ENCODE measurements at regions of chr17 and their contacts with region 1.

Region 1: DNA sequence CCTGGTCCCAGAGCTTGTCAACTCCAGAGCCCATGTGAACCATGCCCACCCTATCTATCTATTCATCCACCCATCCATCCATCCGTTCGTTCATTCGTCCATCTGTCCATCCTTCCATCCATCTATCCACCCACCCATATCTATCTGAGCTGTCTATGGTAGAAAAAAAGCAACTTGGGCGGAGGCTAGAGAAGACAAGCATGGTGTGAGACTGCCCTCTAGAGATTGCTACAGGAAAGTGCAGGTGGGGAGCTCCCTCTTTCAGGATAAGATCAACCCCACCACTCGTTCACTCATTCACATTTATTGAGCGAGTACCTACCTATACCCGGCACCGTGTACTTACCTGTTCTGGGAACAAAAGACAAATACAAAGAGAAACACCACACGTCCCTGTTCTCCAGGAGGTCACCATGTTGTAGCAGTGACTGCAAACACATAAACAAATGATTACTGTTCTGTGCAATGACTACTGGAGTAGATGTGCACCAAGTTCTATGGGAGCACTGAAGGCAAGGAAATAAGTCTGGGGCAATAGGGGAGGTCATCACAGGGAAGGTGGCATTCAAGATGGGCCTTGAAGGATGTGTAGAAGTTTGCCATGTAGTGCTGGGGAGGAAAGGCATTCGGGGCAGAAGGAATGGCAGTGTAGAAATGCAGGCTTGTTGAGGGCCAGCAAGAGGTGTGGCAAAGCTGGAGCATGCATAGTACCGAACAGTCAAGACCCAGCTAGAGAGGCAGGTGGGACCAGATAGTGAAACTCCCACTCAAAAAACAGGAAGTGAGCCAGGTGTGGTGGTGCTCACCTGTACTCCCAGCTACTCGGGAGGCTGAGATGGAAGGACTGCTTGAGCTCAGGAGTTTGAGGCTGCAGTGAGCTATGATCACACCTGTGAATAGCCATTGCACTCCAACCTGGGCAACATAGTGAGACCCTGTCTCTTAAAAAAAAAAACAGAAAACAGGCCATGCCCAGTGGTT is 13.4 kb upstream of the ATP5MC1 start:
- DNase-seq: peak; percentile 68
- ATAC-seq: peak; percentile 83
- H3K4me3 Mint-ChIP-seq: no peak overlapping the region
- H3K27ac Mint-ChIP-seq: no peak overlapping the region
- H3K4me1 Mint-ChIP-seq: no peaks in the 10 kb centered on the region
- H3K27me3 Mint-ChIP-seq: no peaks in the 10 kb centered on the region
- CTCF ChIP-seq: peak; percentile 95

Region 2: DNA sequence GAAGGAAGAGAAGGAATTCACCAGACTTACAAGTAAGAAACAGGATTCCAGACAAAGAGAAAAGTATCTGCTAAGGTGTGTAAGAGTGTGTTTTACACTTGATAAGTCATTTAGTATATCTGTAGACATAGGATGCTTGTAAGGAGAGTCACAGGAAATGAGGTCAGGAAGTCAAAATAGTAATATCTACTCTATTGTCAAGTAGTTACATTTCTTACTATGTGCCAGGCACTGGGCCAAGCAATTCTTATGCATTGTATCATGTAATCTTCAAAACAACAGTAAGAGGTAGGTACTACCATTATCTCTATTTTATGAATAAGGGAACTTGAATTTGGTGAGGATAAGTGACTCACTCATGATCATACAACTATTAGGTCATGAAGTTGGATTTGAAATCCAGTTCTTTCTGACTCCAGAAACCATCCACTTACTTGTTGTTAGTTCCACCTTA is 642.5 kb before region 1 on chr17:
- CTCF ChIA-PET with region 1: no interaction called
- POLR2A ChIA-PET with region 1: no interaction called
- DNase-seq: no peak
- ATAC-seq: no peak
- H3K4me3 Mint-ChIP-seq: no peak overlapping the region
- H3K27ac Mint-ChIP-seq: no peak overlapping the region
- H3K4me1 Mint-ChIP-seq: peaks cover 5% of the 10 kb centered on the region
- H3K27me3 Mint-ChIP-seq: peaks cover 9% of the 10 kb centered on the region
- CTCF ChIP-seq: no peak

Region 3: GRCh38 chr17:48678141-48678971 is 200.9 kb before region 1 on chr17:
- CTCF ChIA-PET with region 1: interaction called, 119 read pairs
- POLR2A ChIA-PET with region 1: interaction called, 5 read pairs
- DNase-seq: peak; percentile 89
- ATAC-seq: peak; percentile 95
- H3K4me3 Mint-ChIP-seq: peak overlapping the region; percentile 64
- H3K27ac Mint-ChIP-seq: no peak overlapping the region
- H3K4me1 Mint-ChIP-seq: peaks cover 7% of the 10 kb centered on the region
- H3K27me3 Mint-ChIP-seq: peaks cover 37% of the 10 kb centered on the region
- CTCF ChIP-seq: peak; percentile 95

Region 4: DNA sequence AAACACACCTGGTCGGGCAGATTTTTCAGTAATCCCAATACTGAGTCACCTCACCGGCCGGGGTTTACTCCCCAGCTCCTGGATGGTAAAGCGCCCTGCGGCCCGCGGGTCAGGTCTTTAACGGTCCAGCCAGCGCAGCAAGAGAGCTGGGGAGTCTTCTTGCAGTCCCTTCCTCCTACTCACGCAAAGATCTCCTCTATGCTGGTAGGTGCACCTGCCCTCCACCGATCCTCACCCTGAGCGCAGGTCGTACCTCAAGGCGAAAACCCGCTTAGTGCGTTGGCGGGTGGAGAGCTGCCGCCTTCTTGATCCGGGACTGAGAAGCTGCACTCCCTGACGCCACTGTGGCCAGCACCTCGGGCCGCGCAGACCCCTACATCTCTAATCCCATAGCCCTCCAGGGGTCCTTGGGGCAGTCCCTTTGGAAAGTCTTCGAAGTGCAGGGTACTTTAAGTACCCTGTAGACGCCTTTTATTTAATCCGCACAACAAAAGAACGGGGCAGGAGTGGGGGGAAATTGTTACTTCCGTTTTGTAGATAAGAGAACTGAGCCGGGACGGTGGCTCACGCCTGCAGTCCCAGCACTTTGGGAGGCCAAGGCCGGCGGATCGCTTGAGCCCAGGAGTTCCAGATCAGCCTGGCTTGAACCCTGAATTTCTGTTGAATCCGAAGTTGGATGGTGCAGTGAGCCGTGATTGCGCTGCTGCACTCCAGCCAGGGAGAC is 140.2 kb before region 1 on chr17:
- CTCF ChIA-PET with region 1: interaction called, 14 read pairs
- POLR2A ChIA-PET with region 1: no interaction called
- DNase-seq: no peak
- ATAC-seq: peak; percentile 68
- H3K4me3 Mint-ChIP-seq: peak overlapping the region; percentile 56
- H3K27ac Mint-ChIP-seq: no peak overlapping the region
- H3K4me1 Mint-ChIP-seq: peaks cover 15% of the 10 kb centered on the region
- H3K27me3 Mint-ChIP-seq: peaks cover 100% of the 10 kb centered on the region
- CTCF ChIP-seq: no peak

Region 5: DNA sequence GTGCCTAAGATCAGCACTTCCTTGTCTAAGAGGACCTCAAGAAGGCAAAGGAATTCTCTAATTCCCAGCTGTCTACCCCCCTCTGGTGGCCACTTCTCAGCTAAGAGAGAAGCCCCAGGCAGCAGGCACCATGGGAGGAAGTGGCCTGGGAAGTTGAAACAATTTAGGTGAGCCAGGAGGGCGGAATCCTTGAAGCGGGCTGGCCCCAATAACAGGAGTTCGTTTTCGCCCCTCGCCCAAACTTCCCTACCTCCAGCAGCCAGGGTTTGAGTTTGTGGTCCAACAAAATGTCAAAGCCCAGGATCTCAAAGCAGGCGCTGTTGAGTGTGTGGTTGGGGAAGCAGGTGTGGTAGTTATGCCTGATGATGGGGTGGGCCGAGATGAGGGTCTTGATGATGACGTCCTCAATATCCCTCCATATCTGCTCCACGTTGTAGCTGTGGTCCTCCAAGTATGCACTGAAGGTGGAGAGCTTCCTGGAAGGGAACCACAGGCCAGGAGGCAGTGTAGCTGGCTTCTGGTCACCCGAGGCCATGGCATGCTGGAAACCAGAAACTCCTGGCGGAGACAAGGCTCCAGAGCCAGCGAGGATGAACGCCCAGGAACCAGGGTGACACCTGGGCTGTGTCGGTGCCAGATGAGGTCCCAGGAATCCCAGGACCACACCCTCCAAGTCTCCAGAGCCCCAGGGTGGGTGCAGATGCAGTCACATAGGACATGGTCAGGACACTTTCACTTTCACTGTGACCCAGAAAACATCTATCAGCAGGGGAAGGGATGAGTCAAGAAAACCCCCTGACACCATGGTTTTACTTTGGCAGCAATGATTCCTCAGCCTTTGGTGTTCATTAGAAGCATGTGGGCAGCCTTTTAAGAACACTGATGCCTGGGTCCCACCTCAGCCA is 87.8 kb before region 1 on chr17:
- CTCF ChIA-PET with region 1: interaction called, 55 read pairs
- POLR2A ChIA-PET with region 1: no interaction called
- DNase-seq: peak; percentile 85
- ATAC-seq: peak; percentile 92
- H3K4me3 Mint-ChIP-seq: no peak overlapping the region
- H3K27ac Mint-ChIP-seq: no peak overlapping the region
- H3K4me1 Mint-ChIP-seq: peaks cover 9% of the 10 kb centered on the region
- H3K27me3 Mint-ChIP-seq: peaks cover 2% of the 10 kb centered on the region; the same call in 1 of the 2 replicates
- CTCF ChIP-seq: peak; percentile 45; the same call in 1 of the 2 replicates

Region 6: DNA sequence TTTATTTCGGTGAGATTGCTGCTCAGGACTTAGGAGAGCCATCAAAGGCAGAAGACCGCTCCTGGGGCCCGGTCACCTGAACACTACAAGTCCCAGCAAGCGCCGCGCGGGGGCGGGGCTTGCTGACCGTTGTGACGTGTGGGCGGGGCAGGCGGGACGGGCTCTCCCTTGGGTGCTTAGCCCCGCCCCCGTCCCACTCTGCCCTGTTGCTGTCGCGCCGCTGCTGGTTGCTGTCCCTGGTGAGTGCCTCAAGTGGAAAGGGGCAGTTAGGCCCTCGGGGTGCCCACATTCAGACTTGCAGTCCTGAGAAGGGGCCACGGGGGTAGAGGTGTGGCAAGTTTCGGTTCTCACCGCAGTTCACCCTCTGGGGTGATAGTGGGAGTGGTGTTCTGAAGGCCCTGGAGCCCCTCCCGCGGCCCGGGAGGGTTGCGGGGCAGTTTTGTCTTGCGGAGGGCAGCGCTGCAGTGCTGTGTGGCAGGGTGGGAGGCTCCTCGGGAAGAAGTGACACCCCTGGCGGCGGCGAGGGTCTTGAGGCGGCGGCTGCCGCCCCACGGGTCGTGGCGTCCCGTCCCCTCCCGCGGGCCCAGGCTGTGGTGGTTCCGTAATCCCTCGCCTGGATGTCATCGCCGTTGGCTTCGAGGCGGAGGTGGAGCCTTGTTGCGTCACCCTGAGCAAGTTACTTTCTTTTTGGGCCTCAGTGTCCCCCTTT is 48.2 kb before region 1 on chr17 and contains the start of gene CALCOCO2:
- CTCF ChIA-PET with region 1: interaction called, 19 read pairs
- POLR2A ChIA-PET with region 1: no interaction called
- DNase-seq: peak; percentile 91
- ATAC-seq: peak; percentile 96
- H3K4me3 Mint-ChIP-seq: peak within 1 kb of the TSS; percentile 96
- H3K27ac Mint-ChIP-seq: peak within 1 kb of the TSS; percentile 98
- H3K4me1 Mint-ChIP-seq: peaks cover 3% of the 10 kb centered on the region; the same call in 1 of the 2 replicates
- H3K27me3 Mint-ChIP-seq: no peaks in the 10 kb centered on the region; the same call in 1 of the 2 replicates
- CTCF ChIP-seq: no peak
- total RNA-seq, gene CALCOCO2: 27.0 to 32.6 TPM (median 31.2 TPM) in 3 replicates

Region 7: DNA sequence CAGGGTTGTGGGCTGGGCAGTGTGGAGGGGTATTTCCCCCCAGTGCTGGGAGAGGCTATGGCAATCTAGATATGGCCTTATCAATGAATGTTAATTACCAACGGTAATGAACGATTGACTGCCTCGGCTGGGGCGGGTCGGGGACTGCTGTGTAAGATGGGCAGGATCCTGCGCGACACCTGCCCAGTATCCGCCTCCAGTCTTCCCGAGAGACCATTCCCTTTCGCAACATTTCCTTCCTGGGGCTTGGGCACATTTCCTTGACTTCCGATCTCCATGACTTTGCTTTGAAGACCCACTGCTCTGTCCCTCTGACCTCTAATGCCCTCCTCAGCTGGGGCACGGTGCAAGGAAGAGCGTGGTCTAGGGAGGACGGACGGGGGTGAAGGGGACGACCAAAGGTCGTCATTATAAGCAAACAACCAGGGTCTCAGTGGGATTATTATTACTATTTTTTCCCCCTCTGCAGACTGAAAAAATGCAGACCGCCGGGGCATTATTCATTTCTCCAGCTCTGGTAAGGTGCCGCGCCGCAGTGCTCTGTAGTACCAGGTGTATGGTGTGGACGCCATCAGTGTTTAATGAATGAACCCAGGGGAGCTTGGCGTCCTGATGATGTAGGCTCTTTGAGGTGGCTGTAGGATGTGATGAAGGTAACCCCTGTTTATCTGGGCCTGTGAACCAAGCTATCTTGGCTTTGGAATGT is 13.9 kb after region 1 on chr17:
- CTCF ChIA-PET with region 1: interaction called, 35 read pairs
- POLR2A ChIA-PET with region 1: interaction called, 3 read pairs
- DNase-seq: no peak
- ATAC-seq: no peak
- H3K4me3 Mint-ChIP-seq: peak overlapping the region; percentile 96
- H3K27ac Mint-ChIP-seq: peak overlapping the region; percentile 98
- H3K4me1 Mint-ChIP-seq: peaks cover 11% of the 10 kb centered on the region
- H3K27me3 Mint-ChIP-seq: no peaks in the 10 kb centered on the region
- CTCF ChIP-seq: no peak

Region 8: GRCh38 chr17:48970224-48970623 is 91.0 kb after region 1 on chr17:
- CTCF ChIA-PET with region 1: no interaction called
- POLR2A ChIA-PET with region 1: no interaction called
- DNase-seq: no peak
- ATAC-seq: no peak
- H3K4me3 Mint-ChIP-seq: no peak overlapping the region
- H3K27ac Mint-ChIP-seq: no peak overlapping the region
- H3K4me1 Mint-ChIP-seq: peaks cover 32% of the 10 kb centered on the region
- H3K27me3 Mint-ChIP-seq: peaks cover 13% of the 10 kb centered on the region
- CTCF ChIP-seq: no peak

Region 9: DNA sequence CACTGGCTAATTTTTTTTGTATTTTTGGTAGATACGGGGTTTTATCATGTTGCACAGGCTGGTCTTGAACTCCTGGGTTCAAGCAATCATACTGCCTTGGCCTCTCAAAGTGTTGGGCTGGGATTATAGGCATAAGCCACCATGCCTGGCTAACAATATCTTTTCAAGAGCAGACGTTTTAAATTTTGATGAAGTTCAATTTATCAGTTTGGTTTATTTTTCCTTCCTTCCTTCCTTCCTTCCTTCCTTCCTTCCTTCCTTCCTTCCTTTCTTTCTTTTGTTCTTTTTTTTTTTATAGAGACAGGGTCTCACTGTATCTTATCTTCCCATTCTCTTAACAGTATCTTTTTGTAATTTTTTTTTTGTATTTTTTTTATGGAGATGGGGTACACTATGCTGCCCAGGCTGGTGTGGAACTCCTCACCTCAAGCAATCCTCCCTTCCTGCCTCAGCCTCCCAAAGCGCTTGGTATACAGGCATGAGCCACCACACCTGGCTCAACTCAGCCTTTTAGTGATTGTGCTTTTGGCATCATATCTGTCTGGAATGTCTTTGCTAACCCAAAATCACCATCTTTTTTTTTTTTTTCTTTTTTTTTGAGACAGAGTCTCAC is 102.8 kb after region 1 on chr17:
- CTCF ChIA-PET with region 1: no interaction called
- POLR2A ChIA-PET with region 1: no interaction called
- DNase-seq: no peak
- ATAC-seq: no peak
- H3K4me3 Mint-ChIP-seq: no peak overlapping the region
- H3K27ac Mint-ChIP-seq: no peak overlapping the region
- H3K4me1 Mint-ChIP-seq: no peaks in the 10 kb centered on the region
- H3K27me3 Mint-ChIP-seq: no peaks in the 10 kb centered on the region; the same call in 1 of the 2 replicates
- CTCF ChIP-seq: no peak

Region 10: GRCh38 chr17:49567871-49568694 is 688.9 kb after region 1 on chr17:
- CTCF ChIA-PET with region 1: no interaction called
- POLR2A ChIA-PET with region 1: no interaction called
- DNase-seq: peak; percentile 92
- ATAC-seq: peak; percentile 63
- H3K4me3 Mint-ChIP-seq: peak overlapping the region; percentile 69
- H3K27ac Mint-ChIP-seq: peak overlapping the region; percentile 32; the same call in 1 of the 2 replicates
- H3K4me1 Mint-ChIP-seq: peaks cover 29% of the 10 kb centered on the region
- H3K27me3 Mint-ChIP-seq: peaks cover 14% of the 10 kb centered on the region
- CTCF ChIP-seq: peak; percentile 97